HAP-1 (cell line): ENCODE measurements at regions of chr22 and their contacts with region 1.

Region 1: DNA sequence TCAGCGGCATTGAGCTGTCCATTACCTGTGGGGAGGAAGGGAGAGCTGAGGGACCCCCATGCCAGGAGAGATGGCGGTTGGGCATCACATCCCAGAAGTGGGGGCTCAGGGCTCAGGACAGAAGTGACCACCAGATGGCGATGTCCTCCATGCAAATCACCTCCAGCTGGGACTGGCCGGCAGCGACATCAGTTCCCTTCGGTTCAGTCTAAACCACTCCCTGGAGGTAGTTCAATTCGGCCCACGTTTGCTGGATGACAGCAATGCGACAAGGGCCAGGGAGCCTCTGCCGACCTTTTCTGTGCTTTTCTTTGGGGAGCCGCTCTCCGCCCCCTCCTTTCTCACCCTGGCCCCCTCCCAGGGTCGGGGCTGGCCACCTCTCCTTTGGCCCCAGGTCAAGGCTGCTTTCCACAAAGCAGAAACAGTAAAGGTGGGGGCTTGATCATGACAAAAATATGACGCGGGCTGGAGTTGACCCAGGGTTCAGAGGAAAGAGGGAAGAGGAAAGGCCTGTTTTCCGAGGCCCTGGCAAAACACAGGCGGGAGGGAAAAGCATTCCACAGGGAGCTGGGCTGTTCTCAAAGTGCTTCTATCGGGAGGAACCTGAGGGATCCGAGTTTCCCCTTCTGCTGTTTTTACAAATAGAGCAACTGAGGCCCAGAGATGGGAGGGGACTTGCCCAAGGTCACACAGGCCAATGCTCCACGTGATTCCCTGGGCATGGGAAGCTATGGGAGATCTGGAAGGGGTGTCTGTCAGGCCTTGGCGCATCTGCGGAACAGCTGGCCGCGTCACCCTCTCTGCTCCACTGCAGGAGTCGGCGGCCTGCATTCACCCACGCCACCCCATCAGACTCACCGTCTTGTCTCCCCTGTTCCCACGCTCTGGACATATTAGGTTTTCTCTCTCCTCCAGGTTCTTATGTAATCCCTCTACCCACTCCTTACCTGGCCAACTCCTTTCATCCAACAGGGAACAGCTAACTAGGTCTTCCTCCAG is 54.7 kb downstream of the FBXO7 start:
- DNase-seq: peak; percentile 68 to 86
- H3K4me3 ChIP-seq: no peak overlapping the region
- H3K4me1 ChIP-seq: no peaks in the 10 kb centered on the region; the same call in 1 of the 2 replicates
- H3K27me3 ChIP-seq: no peaks in the 10 kb centered on the region

Region 2: GRCh38 chr22:32796865-32797573 is 267.7 kb after region 1 on chr22:
- in situ Hi-C with region 1: loop called (anchors 10 kb)
- DNase-seq: peak; percentile 16 to 67
- H3K4me3 ChIP-seq: no peak overlapping the region
- H3K4me1 ChIP-seq: no peaks in the 10 kb centered on the region
- H3K27me3 ChIP-seq: no peaks in the 10 kb centered on the region

Region 3: DNA sequence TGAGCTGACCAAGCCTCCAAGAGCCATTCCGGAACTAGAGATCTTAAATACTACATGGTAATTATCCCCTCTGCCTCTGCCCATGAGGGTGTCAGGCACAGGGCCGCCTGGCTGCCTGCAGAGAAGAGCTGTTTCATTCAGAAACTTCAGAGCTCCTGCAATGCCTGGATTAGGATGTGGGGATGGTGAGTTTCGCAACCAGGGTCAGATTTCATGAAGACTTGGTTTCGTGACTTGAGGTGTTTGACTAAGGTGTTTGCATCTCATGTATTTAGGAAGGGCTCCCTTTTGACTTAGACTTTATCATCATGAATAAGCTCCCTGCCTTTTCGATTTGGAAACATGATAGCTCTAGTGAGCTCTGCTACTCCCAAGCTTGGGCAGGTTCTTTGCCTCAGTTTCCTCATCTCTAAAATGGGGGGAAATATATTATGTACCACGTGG is 281.3 kb after region 1 on chr22:
- in situ Hi-C with region 1: no loop called
- DNase-seq: no peak
- H3K4me3 ChIP-seq: no peak overlapping the region
- H3K4me1 ChIP-seq: no peaks in the 10 kb centered on the region
- H3K27me3 ChIP-seq: no peaks in the 10 kb centered on the region

Region 4: DNA sequence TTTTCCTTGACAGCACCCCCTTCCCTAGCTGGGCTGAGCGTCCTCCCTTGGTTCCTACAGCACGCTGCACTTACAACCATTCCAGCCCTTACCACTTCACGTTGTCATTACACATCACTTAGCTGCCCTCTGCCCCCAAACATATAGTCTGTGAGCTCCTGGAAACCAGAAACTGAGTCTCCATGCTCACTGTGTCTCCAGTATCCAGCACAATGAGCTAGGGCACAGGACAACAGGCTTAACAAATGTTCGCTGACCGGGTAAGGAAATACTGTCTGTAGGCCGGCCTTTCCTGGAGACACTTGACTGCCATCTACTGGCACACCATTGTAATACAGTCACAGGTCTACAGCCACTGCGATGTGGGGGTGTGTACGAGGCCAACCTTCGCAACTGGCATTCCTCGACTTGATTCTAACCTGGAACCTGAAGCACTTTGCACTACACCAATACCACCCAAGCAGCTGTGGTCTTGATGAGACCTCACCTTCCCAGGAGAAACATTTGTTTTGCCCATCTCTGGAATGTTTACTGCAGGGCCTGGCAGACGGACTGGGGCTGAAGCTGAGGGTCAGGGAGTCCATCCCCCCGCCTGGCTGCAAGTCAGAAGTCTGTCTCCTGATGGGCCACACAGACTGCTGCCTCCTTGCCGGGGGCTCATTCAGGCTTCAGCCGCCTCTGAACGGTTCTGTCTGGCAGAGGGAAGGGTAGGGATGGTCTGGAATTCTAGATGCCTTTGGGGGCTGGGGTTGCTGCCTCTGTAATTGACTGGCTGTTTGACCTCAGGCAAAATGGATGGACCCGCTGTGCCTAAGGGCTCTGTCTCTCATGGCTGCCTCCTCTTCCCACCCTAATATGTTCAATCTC is 456.8 kb after region 1 on chr22:
- in situ Hi-C with region 1: loop called (anchors 10 kb)
- DNase-seq: peak; percentile 62 to 82
- H3K4me3 ChIP-seq: no peak overlapping the region
- H3K4me1 ChIP-seq: peaks cover 9% of the 10 kb centered on the region
- H3K27me3 ChIP-seq: no peaks in the 10 kb centered on the region

Region 5: DNA sequence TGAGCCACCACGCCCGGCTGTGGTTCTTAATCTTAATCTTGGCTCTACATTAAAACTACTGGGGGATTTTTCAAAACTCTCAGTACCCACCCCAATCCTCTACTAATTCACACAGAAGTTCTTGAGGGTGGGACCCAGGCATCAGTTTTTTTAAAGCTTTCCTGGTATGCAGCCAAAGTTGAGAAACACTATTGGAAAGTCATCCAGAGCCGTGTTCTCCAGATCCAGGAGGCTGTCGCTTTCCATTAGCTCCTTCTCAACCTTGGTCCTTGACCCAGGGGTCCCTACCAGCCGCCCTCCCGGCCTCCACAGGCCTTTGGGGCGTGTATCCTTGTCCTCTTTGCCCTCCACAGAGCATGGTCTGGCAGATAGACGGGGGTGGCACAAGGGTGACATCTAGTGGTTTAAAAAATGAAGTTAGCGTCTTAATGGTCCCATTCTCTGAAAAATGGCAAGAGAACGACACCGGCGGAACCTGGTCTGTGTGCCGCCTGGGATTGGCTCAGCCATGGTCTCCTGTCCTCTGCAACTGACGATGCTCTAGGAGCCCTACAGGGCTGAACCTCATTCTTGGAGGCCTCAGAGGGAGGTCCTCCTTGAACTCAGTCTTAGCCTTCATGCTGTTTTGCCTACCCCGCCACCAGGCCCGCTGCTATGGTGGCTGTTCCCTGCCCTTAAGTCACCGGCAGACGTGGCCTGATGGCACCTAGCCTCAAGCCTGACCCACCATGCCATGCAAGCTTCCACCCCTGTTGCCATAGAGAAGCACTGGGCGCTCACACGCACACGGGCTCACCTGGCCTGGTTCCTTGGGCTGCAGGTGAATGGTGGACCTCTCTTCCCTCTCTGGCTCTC is 680.9 kb after region 1 on chr22:
- in situ Hi-C with region 1: loop called (anchors 10 kb)
- DNase-seq: peak; percentile 59 to 71
- H3K4me3 ChIP-seq: no peak overlapping the region
- H3K4me1 ChIP-seq: no peaks in the 10 kb centered on the region
- H3K27me3 ChIP-seq: peaks cover 7% of the 10 kb centered on the region; the same call in 1 of the 2 replicates